ENCODE measurements at regions of chr15 and their contacts with region 1.

Region 1: DNA sequence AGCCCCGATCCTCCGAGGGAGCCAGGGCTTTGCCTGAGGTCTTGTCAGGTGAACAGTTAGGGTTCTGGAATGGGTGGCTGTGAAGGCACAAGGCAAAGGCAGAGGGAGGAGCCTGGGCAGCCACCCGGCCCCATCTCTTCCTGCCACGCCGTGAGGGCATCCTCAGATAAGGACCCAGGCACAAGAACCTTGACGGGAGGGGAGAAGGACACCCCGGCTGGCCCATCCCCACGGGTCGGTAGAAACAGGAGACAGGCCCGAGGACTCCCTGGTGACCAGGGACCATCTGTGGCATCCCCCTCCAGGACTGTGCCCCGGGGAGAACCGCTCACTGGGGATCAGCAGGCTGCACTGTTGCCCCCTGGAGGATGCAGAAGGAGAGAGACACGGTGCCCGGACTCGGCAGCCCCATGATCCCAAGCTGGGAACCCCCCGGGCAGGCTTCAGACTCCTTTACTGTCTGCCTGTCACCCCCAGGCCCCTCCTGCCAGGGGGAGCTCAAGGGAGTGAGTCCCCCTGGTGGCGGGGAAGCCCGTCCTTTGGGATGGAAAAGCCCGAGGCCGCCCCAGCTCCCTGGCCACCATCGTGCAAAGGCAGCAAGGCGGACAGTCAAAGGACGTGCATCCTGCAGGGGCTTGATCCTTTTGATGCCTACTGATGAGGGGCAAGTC is 12.3 kb upstream of the PCSK6 start:
- DNase-seq: peak; percentile 34
- H3K4me3 ChIP-seq: no peak overlapping the region
- H3K27ac ChIP-seq: no peak overlapping the region
- H3K4me1 ChIP-seq: no peaks in the 10 kb centered on the region
- H3K27me3 ChIP-seq: no peaks in the 10 kb centered on the region
- CTCF ChIP-seq: peak; percentile 52 to 81
- POLR2A ChIP-seq: no peak

Region 2: DNA sequence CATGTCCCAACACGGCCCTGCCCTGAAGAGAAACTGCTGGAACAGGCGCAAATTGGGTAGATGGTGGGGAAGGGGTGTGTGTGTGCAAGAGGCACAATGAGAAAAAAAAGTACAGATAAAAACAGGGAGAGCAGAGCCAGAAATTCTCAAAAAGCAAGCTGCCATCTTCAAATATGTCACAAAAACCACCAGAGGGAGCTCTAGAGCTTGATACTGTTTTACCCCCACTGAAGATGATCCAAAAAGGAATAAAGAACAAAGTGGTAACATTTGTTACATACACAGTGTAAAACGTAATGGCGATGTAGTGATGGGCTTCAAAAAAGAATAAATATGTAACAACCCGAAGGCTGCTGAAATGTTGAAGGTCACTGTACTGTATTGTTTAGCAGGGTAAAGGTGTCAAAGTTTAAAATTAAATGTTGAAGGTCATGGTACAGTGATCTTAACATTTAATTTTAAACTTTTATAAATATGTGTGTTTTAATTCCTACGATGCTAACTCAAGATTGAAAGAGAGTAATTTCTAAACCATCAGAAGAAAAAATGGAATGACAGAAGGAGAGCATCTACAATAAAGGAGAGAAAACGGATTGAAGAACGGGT is 212.8 kb before region 1 on chr15:
- CTCF ChIA-PET with region 1: interaction called, 18 read pairs
- POLR2A ChIA-PET with region 1: no interaction called
- dilution Hi-C with region 1: no loop called
- intact Hi-C with region 1: no loop called
- DNase-seq: peak; percentile 28
- H3K4me3 ChIP-seq: no peak overlapping the region
- H3K27ac ChIP-seq: no peak overlapping the region
- H3K4me1 ChIP-seq: peaks cover 9% of the 10 kb centered on the region
- H3K27me3 ChIP-seq: no peaks in the 10 kb centered on the region
- CTCF ChIP-seq: peak; percentile 46 to 57
- POLR2A ChIP-seq: no peak

Region 3: DNA sequence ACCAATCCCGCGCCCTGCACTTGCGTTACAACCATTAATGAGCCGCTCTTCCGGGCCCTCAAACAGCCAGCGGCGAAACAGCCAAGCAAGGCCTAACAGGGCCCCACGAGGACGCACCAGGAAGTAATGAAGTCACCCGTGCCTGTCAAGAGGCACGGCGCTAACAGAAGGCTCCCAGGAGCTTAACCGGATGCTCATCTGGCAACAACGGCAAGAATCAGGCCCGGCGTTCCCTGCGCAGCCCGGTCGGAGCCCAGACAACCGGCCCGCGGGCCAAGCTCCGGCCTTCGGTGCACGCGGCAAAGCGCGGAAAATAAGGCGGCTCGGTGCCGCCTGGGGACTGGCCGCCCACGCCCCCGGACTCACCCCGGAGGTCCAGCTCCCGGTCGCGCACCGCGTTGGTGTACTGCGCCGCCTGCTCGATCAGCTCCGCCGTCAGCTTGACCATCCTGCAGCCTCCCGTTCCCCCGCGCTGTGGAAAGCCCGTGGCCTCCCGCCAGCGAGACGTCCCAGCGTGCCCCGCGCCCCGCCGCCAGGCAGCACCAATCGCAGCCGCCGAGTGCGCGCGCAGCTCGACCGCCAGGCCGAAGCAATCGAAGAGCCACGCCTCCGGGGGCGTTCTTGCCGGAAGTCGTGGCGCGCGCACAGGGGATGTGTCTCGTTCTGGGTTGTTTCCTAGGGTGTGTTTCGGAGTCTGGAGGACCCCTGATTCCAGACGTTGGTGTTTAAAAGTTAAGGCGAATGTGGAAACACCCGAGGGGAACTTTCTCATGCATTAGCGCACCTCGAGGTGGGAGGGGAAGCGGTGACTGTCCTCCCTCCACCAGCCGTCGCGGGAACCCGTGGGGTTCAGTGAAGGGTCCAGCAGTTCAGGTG is 206.9 kb before region 1 on chr15 and contains the start of gene SNRPA1:
- CTCF ChIA-PET with region 1: interaction called, 90 read pairs
- POLR2A ChIA-PET with region 1: no interaction called
- dilution Hi-C with region 1: no loop called
- intact Hi-C with region 1: loop called (anchors 1 kb)
- DNase-seq: peak; percentile 95
- H3K4me3 ChIP-seq: peak within 1 kb of the TSS; percentile 77 to 94 (median 80)
- H3K27ac ChIP-seq: peak within 1 kb of the TSS; percentile 70
- H3K4me1 ChIP-seq: peaks cover 14% of the 10 kb centered on the region
- H3K27me3 ChIP-seq: no peaks in the 10 kb centered on the region
- CTCF ChIP-seq: no peak
- POLR2A ChIP-seq: peak; percentile 53
- total RNA-seq, gene SNRPA1: 80.8 and 82.7 TPM in 2 replicates

Region 4: GRCh38 chr15:101305820-101306255 is 196.0 kb before region 1 on chr15:
- CTCF ChIA-PET with region 1: interaction called, 90 read pairs
- POLR2A ChIA-PET with region 1: no interaction called
- dilution Hi-C with region 1: no loop called
- intact Hi-C with region 1: no loop called
- DNase-seq: no peak
- H3K4me3 ChIP-seq: no peak overlapping the region
- H3K27ac ChIP-seq: no peak overlapping the region
- H3K4me1 ChIP-seq: no peaks in the 10 kb centered on the region
- H3K27me3 ChIP-seq: no peaks in the 10 kb centered on the region
- CTCF ChIP-seq: no peak
- POLR2A ChIP-seq: no peak

Region 5: DNA sequence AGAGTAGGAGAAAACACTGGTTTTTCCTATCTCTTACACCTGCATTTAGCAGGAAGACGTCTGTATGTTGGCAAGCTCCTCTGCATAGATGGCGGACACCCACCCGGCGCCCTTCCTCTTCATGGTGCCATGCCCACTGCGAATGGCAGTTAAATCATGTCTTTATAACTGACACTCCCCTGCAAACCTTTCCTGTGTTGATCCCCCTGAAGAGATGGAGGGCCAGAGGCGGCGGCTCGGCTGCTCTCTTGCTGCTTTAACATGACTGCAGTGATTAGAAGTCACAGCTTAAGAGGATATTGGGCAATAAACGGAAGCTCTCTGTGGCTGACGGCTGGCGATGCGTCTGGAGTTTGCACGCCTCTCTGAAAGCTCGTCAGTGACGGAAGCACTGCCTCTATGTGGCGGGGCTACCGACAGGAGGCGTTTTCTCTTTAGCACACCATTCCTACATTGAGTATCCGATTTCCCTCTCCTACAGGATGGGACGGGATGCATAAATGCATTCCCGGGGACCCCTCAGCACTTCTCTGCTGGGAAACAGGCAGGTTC is 181.3 kb before region 1 on chr15:
- CTCF ChIA-PET with region 1: interaction called, 28 read pairs
- POLR2A ChIA-PET with region 1: no interaction called
- dilution Hi-C with region 1: no loop called
- intact Hi-C with region 1: no loop called
- DNase-seq: peak; percentile 29
- H3K4me3 ChIP-seq: no peak overlapping the region
- H3K27ac ChIP-seq: no peak overlapping the region
- H3K4me1 ChIP-seq: no peaks in the 10 kb centered on the region
- H3K27me3 ChIP-seq: no peaks in the 10 kb centered on the region
- CTCF ChIP-seq: peak; percentile 40 to 43
- POLR2A ChIP-seq: no peak

Region 6: DNA sequence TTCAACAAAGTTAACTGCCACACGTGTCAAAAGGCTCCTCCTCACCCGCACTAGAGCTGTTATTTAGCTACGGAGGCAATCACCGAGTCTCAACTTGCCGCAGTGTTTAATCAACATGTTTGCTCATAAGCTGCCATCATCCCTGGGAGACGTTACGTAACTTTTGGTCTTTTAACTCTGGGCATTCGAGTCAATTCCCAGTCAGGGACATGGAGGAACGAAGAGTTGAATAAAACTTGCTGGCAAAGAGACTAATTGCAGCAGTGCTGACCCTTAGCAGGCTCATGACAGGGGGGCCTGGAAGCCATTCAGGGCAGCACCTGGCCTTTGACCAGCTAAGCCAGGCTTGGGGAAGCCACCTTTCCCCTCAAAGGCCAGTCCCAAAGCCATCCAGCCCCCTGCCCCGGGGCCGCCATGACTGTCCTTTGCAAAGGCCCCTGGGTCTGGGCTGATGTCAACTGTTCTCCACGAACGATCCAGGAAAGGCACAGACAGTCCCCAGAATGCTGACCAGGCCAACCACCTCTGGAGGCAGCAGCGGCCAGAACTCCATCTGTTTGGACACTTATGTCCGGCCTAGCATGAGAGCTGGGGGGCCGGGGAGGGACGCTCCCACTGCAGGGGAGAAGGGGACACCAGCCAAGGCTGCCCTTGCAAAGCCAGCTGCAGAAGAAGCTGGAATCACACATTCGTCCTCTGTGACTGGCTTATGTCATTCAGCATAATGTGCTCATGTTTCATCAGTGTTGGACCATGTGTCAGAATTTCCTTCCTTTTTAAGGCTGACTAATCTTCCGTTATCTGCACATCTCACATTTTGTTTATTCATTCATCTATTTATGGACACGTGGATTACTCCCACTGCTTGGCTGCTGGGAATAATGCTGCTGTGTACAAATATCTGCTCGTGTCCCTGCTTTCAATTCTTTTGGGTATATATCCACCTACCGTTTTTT is 56.0 kb before region 1 on chr15:
- CTCF ChIA-PET with region 1: interaction called, 14 read pairs
- POLR2A ChIA-PET with region 1: no interaction called
- dilution Hi-C with region 1: no loop called
- intact Hi-C with region 1: no loop called
- DNase-seq: peak; percentile 92
- H3K4me3 ChIP-seq: no peak overlapping the region
- H3K27ac ChIP-seq: peak overlapping the region; percentile 87
- H3K4me1 ChIP-seq: peaks cover 18% of the 10 kb centered on the region
- H3K27me3 ChIP-seq: peaks cover 0 to 5% of the 10 kb centered on the region in 2 experiments
- CTCF ChIP-seq: no peak
- POLR2A ChIP-seq: peak; percentile 47

Measured in endothelial cell of umbilical vein (primary cell).